Endothelial cell of umbilical vein (primary cell): ENCODE measurements at regions of chr2 and their contacts with region 1.

Region 1: GRCh38 chr2:12931186-12931844 is 214.6 kb downstream of the TRIB2 start:
- DNase-seq: peak; percentile 59
- H3K4me3 ChIP-seq: no peak overlapping the region
- H3K27ac ChIP-seq: no peak overlapping the region
- H3K4me1 ChIP-seq: peaks cover 9% of the 10 kb centered on the region
- H3K27me3 ChIP-seq: no peaks in the 10 kb centered on the region
- CTCF ChIP-seq: peak; percentile 74 to 78
- POLR2A ChIP-seq: no peak

Region 2: GRCh38 chr2:12155303-12156051 is 775.8 kb before region 1 on chr2:
- CTCF ChIA-PET with region 1: no interaction called
- POLR2A ChIA-PET with region 1: interaction called, 3 read pairs
- dilution Hi-C with region 1: no loop called
- intact Hi-C with region 1: loop called (anchors 5 kb)
- DNase-seq: peak; percentile 97
- H3K4me3 ChIP-seq: no peak overlapping the region
- H3K27ac ChIP-seq: peak overlapping the region; percentile 85
- H3K4me1 ChIP-seq: peaks cover 21% of the 10 kb centered on the region
- H3K27me3 ChIP-seq: peaks cover 0 to 2% of the 10 kb centered on the region in 2 experiments
- CTCF ChIP-seq: no peak
- POLR2A ChIP-seq: peak; percentile 36

Region 3: DNA sequence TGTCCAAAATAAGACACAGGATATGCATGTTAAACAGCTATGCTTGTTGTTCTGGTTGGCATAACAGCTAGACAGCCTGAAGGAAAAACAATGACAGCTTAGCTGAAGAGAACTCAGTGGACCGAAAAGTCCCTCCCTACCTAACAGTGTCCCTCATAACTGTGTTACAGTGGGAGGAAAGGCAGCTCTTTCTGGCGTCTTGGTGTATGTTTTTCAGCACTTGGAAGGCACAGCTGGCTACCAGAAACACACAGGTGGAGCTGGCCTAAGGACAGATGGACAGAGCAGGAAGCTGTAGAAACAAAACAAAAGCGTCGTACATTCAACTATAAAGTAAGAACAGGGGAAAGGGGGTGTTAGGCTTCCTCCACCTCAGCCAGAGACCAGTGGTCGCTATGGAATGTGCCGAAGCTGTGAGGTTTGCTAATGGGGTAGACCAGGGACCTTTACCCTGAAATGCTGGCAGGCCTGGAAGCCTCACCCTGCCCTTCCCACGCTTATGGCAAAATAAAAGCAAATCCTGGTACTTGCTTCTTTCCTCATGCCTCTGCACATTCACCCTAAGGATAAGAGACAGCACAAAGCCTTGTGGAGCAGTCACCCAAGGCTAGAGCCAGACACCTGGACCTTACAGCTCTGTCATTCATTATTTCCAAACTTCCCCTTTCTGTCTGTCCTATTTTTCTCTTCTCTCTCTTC is 318.0 kb before region 1 on chr2:
- CTCF ChIA-PET with region 1: interaction called, 3 read pairs
- POLR2A ChIA-PET with region 1: no interaction called
- dilution Hi-C with region 1: no loop called
- intact Hi-C with region 1: loop called (anchors 5 kb)
- DNase-seq: no peak
- H3K4me3 ChIP-seq: no peak overlapping the region
- H3K27ac ChIP-seq: no peak overlapping the region
- H3K4me1 ChIP-seq: no peaks in the 10 kb centered on the region
- H3K27me3 ChIP-seq: no peaks in the 10 kb centered on the region
- CTCF ChIP-seq: no peak
- POLR2A ChIP-seq: no peak

Region 4: DNA sequence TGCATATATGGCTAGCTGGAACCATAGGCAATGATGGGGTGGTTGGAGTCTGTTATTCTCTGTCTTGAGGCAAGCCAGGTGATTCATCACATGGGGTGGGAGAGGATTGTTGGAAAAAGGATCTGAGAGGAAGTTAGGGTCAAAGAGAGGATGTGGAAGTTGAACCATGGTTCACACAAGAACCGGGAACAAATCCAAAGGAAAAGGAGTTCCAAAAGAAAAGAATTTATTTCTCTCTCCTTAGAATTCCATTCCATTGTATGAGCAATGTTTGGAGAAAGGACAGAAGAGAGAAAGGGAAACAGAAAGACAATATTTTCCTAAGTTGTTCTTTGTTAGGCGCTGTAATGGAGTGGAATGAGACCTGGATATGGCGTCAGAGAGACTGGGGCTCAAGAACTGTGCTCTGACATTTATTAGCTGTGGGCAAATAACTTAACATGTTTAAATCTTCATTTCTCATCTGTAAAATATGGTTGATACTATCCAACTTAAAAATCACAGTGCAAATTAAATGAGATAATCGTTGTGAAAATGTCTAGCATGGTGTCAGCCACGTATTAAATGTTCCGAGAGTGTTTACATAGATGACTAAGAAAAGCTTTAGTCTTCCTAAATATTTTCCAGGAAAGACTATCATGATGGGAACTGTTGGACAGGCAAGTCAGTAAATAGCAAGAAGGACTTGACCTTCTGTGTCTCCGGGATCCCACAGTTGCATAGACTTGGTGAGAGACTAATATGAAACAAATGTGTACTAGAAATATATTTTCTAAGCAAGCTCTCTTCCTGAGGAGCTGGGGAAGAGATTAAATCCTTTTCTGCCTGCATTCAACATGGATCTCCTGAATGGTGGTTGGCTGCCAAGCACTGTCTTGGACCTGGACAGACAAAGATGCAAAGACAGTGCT is 143.2 kb before region 1 on chr2:
- CTCF ChIA-PET with region 1: interaction called, 17 read pairs
- POLR2A ChIA-PET with region 1: no interaction called
- dilution Hi-C with region 1: no loop called
- intact Hi-C with region 1: loop called (anchors 1 kb)
- DNase-seq: peak; percentile 96
- H3K4me3 ChIP-seq: peak overlapping the region in 1 of 3 experiments; percentile 51
- H3K27ac ChIP-seq: peak overlapping the region; percentile 99
- H3K4me1 ChIP-seq: peaks cover 20% of the 10 kb centered on the region
- H3K27me3 ChIP-seq: no peaks in the 10 kb centered on the region
- CTCF ChIP-seq: no peak
- POLR2A ChIP-seq: no peak

Region 5: GRCh38 chr2:12856934-12857601 is 74.2 kb before region 1 on chr2:
- CTCF ChIA-PET with region 1: interaction called, 13 read pairs
- POLR2A ChIA-PET with region 1: no interaction called
- dilution Hi-C with region 1: no loop called
- intact Hi-C with region 1: loop called (anchors 2 kb)
- DNase-seq: peak; percentile 81
- H3K4me3 ChIP-seq: peak overlapping the region in 1 of 3 experiments; percentile 23
- H3K27ac ChIP-seq: peak overlapping the region; percentile 91
- H3K4me1 ChIP-seq: peaks cover 27% of the 10 kb centered on the region
- H3K27me3 ChIP-seq: no peaks in the 10 kb centered on the region
- CTCF ChIP-seq: no peak
- POLR2A ChIP-seq: peak; percentile 38

Region 6: DNA sequence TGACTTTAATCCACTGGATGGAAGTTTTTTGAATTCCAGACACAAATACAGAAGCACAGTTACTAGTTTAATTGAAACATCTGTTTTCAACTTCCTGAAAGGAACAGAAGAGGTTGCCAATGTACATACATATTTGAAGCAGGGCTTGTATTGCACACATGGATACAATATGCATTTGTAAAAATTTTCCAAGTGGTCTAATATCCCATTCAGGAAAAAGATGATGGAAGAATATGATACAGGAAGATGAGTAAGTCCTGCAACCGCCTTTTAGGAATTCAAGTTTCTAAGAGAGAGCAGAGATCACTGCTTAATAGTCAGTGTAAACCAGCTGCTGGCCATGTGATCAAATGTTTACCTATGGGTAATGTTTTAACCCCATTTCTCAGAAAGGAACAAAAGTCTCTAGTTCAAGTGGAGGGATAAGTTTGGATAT is 50.9 kb after region 1 on chr2:
- CTCF ChIA-PET with region 1: interaction called, 3 read pairs
- POLR2A ChIA-PET with region 1: no interaction called
- dilution Hi-C with region 1: no loop called
- intact Hi-C with region 1: loop called (anchors 5 kb)
- DNase-seq: peak; percentile 90
- H3K4me3 ChIP-seq: no peak overlapping the region
- H3K27ac ChIP-seq: peak overlapping the region; percentile 50
- H3K4me1 ChIP-seq: peaks cover 28% of the 10 kb centered on the region
- H3K27me3 ChIP-seq: no peaks in the 10 kb centered on the region
- CTCF ChIP-seq: no peak
- POLR2A ChIP-seq: no peak